WTC11 (cell line): ENCODE measurements at regions of chr1 and their contacts with region 1.

Region 1: GRCh38 chr1:153277817-153278216 is 18.3 kb downstream of the LORICRIN start:
- DNase-seq: peak; percentile 78
- ATAC-seq: peak; percentile 96
- H3K4me3 Mint-ChIP-seq: no peak overlapping the region
- H3K27ac Mint-ChIP-seq: no peak overlapping the region
- H3K4me1 Mint-ChIP-seq: peaks cover 12% of the 10 kb centered on the region
- H3K27me3 Mint-ChIP-seq: peaks cover 29% of the 10 kb centered on the region
- CTCF ChIP-seq: peak; percentile 88

Region 2: GRCh38 chr1:153261281-153262069 is 16.3 kb before region 1 on chr1:
- CTCF ChIA-PET with region 1: interaction called, 10 read pairs
- POLR2A ChIA-PET with region 1: no interaction called
- DNase-seq: peak; percentile 66
- ATAC-seq: peak; percentile 74
- H3K4me3 Mint-ChIP-seq: peak overlapping the region; percentile 79
- H3K27ac Mint-ChIP-seq: no peak overlapping the region
- H3K4me1 Mint-ChIP-seq: peaks cover 13% of the 10 kb centered on the region
- H3K27me3 Mint-ChIP-seq: peaks cover 82% of the 10 kb centered on the region
- CTCF ChIP-seq: no peak

Region 3: DNA sequence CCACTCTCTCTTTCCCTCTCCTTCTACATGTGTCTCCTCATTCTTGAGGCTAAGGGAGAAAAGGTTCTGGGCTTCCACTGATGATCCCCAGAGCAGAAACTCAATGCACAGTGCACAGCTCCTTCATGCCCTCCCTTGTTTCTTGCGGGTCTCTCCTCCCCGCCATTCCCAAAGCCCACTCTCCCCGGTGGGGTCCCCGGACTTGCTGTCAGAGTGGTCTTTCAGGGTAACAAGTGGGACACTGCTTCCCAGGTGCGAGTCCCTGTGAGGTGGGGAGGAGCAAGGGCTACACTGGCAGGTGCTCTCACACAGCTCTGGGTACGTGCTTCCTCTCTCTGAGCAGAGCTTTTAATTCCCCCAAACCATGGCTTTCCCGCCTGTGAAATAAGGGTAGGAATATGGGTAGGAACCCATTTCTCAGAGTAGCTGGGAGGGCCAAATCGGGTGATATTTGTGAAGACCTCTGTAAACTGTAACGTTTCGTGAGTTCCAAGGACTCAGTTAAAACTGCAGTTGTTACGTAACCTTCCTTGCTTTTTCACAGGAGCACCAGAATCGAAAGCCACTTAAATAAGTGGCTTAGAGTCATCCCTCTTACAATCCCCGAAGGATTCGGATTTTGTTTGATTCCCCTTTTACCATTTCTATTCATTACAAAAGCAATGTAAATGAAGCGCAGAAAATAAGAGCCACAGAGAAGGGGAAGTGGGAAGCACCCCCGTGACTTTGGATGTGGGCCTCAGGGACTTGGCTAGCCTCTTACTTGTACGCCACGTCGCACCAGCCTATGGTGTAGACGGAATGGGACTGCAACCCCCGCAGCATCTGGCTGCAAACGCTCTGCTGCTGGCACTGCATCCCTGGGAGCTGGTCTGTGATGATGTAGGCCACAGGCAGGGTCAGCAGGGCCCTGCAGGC is 28.7 kb after region 1 on chr1:
- CTCF ChIA-PET with region 1: no interaction called
- POLR2A ChIA-PET with region 1: no interaction called
- DNase-seq: no peak
- ATAC-seq: peak; percentile 44; the same call in 1 of the 2 replicates
- H3K4me3 Mint-ChIP-seq: no peak overlapping the region
- H3K27ac Mint-ChIP-seq: no peak overlapping the region
- H3K4me1 Mint-ChIP-seq: peaks cover 18% of the 10 kb centered on the region
- H3K27me3 Mint-ChIP-seq: no peaks in the 10 kb centered on the region
- CTCF ChIP-seq: no peak

Region 4: GRCh38 chr1:153375511-153375910 is 97.7 kb after region 1 on chr1 and contains the start of gene S100A12:
- CTCF ChIA-PET with region 1: no interaction called
- POLR2A ChIA-PET with region 1: no interaction called
- DNase-seq: no peak
- ATAC-seq: no peak
- H3K4me3 Mint-ChIP-seq: no peak within 1 kb of the TSS
- H3K27ac Mint-ChIP-seq: no peak within 1 kb of the TSS
- H3K4me1 Mint-ChIP-seq: no peaks in the 10 kb centered on the region
- H3K27me3 Mint-ChIP-seq: peaks cover 14% of the 10 kb centered on the region
- CTCF ChIP-seq: no peak
- total RNA-seq, gene S100A12: not detected in 3 replicates